ENCODE measurements at regions of chr6 and their contacts with region 1.

Region 1: DNA sequence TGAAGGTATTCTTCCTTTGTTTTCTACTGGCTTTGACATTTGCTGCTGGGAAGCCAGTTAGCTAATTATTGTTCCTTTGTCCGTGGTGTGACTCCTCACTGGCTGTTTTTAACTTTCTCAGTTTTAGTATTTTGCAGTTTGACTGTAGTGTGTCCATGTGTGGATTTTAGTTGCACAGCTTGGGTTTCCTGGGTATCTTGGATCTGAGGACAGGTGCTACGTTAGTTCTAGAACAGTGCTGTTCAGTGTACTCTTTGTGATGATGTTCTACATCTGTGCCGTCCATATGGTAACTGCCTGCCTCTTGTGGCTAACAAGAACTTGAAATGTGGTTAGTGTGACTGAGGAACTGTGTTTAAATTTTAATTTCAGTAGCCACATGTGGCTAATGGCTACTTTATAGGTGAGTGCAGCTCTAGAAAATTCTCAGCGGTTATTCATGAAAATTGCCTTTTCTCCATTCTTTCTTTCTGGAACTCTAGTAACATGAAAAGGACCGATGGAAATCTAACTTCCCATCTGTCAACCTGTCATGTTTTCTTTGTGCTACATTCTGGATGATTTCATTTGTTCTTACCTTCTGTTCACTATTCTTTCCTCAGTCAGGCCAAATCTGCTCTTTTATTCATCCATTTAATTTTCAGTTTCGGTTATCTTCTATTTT is 7.4 kb downstream of the SNX9 start:
- DNase-seq: no peak
- ATAC-seq: peak; percentile 47
- H3K4me3 Mint-ChIP-seq: peak overlapping the region; percentile 49
- H3K27ac Mint-ChIP-seq: peak overlapping the region; percentile 89
- H3K4me1 Mint-ChIP-seq: peaks cover 73% of the 10 kb centered on the region
- H3K27me3 Mint-ChIP-seq: no peaks in the 10 kb centered on the region
- CTCF ChIP-seq: no peak

Region 2: DNA sequence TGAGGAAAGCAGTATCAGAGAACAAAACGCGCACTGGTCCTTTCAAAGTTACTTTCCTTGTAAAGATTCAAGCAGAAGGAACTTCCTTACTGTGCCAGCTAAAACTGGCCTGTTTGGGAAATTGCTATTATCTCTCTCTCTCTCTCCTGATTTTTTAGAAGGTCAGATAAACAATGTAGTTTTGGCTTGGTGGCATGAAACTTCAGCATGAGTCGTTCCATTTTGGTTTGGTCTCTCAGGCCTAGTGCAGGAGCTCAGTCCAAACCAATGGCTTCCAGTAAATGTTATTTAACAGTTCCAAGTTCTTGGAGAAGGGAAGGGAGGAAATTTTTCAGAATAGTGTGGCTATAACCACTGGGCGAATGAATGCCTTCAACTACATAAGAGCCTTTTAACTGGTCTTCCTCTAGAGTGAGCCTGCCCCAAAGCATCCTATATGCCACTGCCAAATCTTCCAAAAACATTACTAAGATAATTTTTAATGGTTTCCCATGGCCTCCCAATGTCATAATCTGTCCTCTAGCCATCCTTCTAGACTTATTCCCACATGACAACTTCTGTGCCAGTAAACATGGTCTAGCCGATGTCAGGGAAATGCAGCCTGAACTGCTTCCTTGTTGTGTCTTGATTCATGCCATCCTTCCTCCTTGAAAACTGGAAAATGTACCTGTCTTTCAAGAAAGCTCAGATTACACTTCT is 16.6 kb before region 1 on chr6:
- CTCF ChIA-PET with region 1: no interaction called
- POLR2A ChIA-PET with region 1: no interaction called
- intact Hi-C with region 1: no loop called
- DNase-seq: no peak
- ATAC-seq: no peak
- H3K4me3 Mint-ChIP-seq: no peak overlapping the region
- H3K27ac Mint-ChIP-seq: no peak overlapping the region
- H3K4me1 Mint-ChIP-seq: peaks cover 39% of the 10 kb centered on the region
- H3K27me3 Mint-ChIP-seq: peaks cover 2% of the 10 kb centered on the region
- CTCF ChIP-seq: no peak

Region 3: GRCh38 chr6:157845493-157846259 is 15.2 kb after region 1 on chr6:
- CTCF ChIA-PET with region 1: interaction called, 6 read pairs
- POLR2A ChIA-PET with region 1: interaction called, 14 read pairs
- intact Hi-C with region 1: no loop called
- DNase-seq: no peak
- ATAC-seq: peak; percentile 58
- H3K4me3 Mint-ChIP-seq: no peak overlapping the region
- H3K27ac Mint-ChIP-seq: peak overlapping the region; percentile 40
- H3K4me1 Mint-ChIP-seq: peaks cover 86% of the 10 kb centered on the region
- H3K27me3 Mint-ChIP-seq: no peaks in the 10 kb centered on the region
- CTCF ChIP-seq: no peak

Region 4: GRCh38 chr6:157867155-157867559 is 36.7 kb after region 1 on chr6:
- CTCF ChIA-PET with region 1: no interaction called
- POLR2A ChIA-PET with region 1: no interaction called
- intact Hi-C with region 1: loop called (anchors 5 kb)
- DNase-seq: no peak
- ATAC-seq: peak; percentile 70
- H3K4me3 Mint-ChIP-seq: no peak overlapping the region
- H3K27ac Mint-ChIP-seq: no peak overlapping the region
- H3K4me1 Mint-ChIP-seq: peaks cover 39% of the 10 kb centered on the region
- H3K27me3 Mint-ChIP-seq: no peaks in the 10 kb centered on the region
- CTCF ChIP-seq: no peak

Measured in activated CD8-positive, alpha-beta T cell treated with anti-CD3 and anti-CD28 coated beads for 36 hours (primary cell).